Lower leg skin (tissue), 4 donors: ENCODE measurements at regions of chr14 and their contacts with region 1.

Region 1: GRCh38 chr14:70489579-70490175 is 37.7 kb downstream of the ADAM21 start:
- DNase-seq: no peak
- H3K4me3 ChIP-seq: no peak overlapping the region
- CTCF ChIP-seq: no peak
- POLR2A ChIP-seq: no peak

Region 2: DNA sequence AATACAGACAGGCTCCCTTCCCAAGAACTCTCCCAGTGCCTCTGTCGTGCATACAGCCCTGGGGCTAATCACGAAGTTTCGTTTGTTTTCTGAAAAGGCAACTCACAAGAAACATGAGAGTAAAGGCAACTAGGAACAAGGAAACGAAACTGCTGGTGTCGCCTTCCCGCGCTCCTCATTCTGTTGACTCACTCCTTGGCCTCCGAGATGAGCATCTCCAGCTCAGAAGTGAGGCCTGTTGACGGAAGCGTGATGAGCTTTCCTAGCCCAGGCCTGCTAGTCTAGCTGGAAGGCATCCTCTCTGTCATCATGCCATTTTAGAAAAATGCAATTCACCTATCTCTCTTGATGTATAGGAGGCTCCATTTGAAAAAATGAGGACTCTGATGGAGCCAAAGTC is 202.5 kb after region 1 on chr14:
- intact Hi-C with region 1: loop called (anchors 5 kb)
- DNase-seq: peak in 1 of 2 donors; percentile 33
- H3K4me3 ChIP-seq: no peak overlapping the region
- CTCF ChIP-seq: no peak
- POLR2A ChIP-seq: no peak

Region 3: DNA sequence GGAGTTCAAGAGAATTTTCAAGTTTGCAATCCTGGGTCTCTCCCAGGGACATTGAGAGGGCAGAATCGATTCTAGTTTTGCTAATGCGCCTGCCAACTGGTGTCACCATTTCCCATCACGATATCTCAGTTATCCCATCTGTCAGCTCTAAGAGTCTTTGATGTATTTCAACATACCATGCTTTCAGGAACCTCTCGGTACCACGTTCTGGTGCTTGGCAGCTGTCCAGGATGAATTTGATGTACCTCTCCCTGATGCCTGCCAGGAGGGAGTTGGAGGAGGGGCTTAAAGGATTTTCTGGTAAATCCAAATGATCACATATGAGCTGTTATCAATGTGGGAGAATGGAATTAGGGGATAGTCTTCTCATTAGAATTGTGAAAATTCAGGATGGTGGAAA is 1775.0 kb after region 1 on chr14:
- intact Hi-C with region 1: no loop called
- DNase-seq: no peak
- H3K4me3 ChIP-seq: no peak overlapping the region
- CTCF ChIP-seq: no peak
- POLR2A ChIP-seq: no peak